ENCODE measurements at regions of chr22 and their contacts with region 1.

Region 1: GRCh38 chr22:21972293-21972779 is 10.3 kb downstream of the TOP3B start:
- DNase-seq: peak; percentile 63
- ATAC-seq: peak; percentile 71
- H3K4me3 Mint-ChIP-seq: no peak overlapping the region
- H3K27ac Mint-ChIP-seq: no peak overlapping the region
- H3K4me1 Mint-ChIP-seq: no peaks in the 10 kb centered on the region
- H3K27me3 Mint-ChIP-seq: no peaks in the 10 kb centered on the region

Region 2: DNA sequence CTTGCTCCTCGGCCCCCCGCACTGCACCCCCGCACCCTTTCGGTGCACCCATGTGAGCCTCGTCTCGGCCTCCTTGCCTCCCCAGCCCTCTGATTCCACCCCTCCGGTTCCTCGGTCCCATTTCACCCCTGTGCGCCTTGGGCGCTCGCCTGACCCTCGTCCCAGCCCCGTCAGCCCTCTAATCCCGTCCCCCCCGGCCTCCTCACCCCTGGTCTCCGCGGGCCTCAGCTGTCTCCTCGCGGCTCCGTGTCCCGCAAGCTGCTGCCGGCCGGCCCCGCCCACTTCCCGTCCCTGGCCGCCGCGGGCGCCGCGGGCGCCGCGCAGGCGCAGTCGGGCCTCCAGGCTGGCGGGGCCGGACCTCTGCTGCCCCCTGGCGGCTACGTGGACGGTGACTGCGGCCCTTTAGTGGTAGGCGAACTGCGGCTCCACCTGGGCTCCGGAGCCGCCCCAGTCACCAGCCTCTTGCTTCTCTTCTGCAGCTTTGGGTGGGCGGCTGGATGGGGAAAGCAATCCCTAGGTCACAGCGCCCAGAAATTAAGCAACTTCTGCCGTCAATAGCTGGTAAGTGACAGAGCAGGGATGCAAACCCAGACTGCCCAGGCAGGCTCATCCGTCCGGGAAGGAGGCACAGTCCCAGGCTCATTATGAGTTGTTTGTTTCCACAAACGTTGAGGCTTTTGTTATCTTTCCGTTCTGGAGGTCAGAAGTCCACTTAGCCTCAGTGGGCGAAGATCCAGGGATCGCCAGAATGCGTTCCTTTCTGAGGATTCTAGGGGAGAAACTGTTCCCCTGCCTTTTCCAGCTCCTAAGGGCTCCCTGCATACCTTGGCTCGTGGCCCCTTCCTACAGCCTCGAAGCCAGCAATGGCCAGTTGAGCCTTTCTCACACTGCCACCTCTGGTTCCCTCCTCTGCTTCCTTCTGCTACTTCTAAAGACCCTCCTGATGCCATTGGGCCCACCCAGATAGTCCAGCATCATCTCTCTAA is 19.5 kb before region 1 on chr22 and contains the start of gene PPM1F:
- CTCF ChIA-PET with region 1: interaction called, 26 read pairs
- DNase-seq: peak; percentile 90
- ATAC-seq: peak; percentile 91
- H3K4me3 Mint-ChIP-seq: peak within 1 kb of the TSS; percentile 74
- H3K27ac Mint-ChIP-seq: peak within 1 kb of the TSS; percentile 68
- H3K4me1 Mint-ChIP-seq: peaks cover 14% of the 10 kb centered on the region
- H3K27me3 Mint-ChIP-seq: peaks cover 3% of the 10 kb centered on the region
- total RNA-seq, gene PPM1F: 14.4 to 22.9 TPM

Region 3: DNA sequence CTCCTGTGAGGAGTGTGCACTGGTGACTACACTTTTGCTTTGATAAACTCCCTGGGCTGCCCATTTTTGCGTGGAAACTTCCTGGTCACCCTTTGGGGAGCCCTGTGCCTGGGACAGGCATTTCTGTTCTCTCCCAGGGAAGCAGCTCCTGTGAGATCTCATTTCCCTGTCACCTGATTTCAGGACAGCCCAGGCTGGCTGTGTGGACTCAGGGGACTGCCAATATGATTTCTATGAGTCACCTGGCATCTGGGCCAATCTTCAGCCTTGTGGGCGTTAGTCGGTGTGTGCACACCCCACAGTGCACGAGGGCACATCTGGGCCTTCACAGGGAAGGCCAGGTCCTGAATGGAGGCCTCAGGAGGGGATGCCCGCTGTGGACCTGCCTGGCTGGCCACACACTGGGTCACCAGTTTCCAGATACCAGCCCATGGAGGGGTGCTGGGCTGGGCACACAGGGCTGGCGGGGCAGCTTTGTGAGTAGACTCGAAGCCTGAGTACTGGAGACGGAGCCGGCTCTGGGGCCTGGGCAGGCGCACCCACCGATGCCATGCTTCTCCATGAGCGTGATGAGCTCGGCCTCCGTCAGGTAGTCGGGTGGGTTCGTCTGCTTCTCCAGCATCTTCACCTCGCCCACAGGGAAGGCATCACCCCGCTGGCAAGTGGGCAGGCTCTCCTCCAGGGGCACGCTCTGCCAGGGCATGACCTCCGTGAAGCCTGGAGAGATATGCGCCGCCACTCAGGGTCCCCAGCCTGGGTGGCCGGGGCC is 10.3 kb before region 1 on chr22:
- CTCF ChIA-PET with region 1: interaction called, 10 read pairs
- DNase-seq: no peak
- ATAC-seq: no peak
- H3K4me3 Mint-ChIP-seq: no peak overlapping the region
- H3K27ac Mint-ChIP-seq: no peak overlapping the region
- H3K4me1 Mint-ChIP-seq: no peaks in the 10 kb centered on the region
- H3K27me3 Mint-ChIP-seq: no peaks in the 10 kb centered on the region

Region 4: GRCh38 chr22:21982338-21982965 is 10.1 kb after region 1 on chr22 and contains the start of gene TOP3B:
- CTCF ChIA-PET with region 1: interaction called, 32 read pairs
- DNase-seq: peak; percentile 87
- ATAC-seq: peak; percentile 97
- H3K4me3 Mint-ChIP-seq: peak within 1 kb of the TSS; percentile 88
- H3K27ac Mint-ChIP-seq: peak within 1 kb of the TSS; percentile 86
- H3K4me1 Mint-ChIP-seq: peaks cover 30% of the 10 kb centered on the region
- H3K27me3 Mint-ChIP-seq: no peaks in the 10 kb centered on the region
- total RNA-seq, gene TOP3B: 46.6 to 50.4 TPM

Region 5: GRCh38 chr22:22037740-22038139 is 65.4 kb after region 1 on chr22:
- CTCF ChIA-PET with region 1: no interaction called
- DNase-seq: no peak
- ATAC-seq: no peak
- H3K4me3 Mint-ChIP-seq: no peak overlapping the region
- H3K27ac Mint-ChIP-seq: no peak overlapping the region
- H3K4me1 Mint-ChIP-seq: no peaks in the 10 kb centered on the region
- H3K27me3 Mint-ChIP-seq: peaks cover 27% of the 10 kb centered on the region